Caco-2 (cell line): ENCODE measurements at regions of chr7 and their contacts with region 1.

Region 1: DNA sequence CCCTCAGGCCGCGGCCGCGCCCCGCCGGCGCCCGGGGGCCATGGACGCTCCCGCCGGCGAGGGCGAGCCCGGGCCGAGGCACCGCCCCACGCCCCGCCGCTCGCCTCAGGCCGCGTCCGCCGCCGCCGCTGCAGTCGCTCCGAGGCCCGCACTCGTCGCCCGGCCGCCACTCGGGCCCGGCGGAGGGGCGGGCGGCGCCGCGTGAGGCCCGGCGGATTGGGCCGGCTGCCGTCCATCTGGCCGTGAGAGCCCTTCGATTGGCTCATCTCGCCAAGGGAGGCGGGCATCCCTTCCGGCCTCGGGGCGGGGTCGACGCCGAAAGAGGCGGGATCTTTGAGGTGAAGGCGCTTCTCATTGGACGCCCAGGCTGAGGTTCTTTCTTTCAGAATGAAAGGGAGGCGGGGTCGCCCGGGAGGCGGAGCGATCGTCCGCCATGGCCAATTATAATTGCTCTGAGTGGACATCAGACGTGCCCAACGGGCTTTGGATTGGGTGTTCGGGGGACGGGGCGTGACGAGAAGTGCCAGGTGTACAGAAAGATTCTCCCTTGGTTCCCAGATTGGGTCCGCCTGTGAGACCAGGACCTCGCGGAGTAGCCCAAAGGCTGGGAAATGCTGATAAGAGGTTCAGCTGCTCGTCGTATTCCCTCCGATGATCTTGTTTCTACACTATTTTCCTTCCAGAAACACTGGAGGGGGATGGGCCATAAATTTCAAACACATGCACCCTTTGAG is at the start of gene GNA12:
- DNase-seq: peak; percentile 99
- H3K4me3 ChIP-seq: peak within 1 kb of the TSS; percentile 94
- H3K4me3 Mint-ChIP-seq: peak within 1 kb of the TSS; percentile 77
- H3K27ac Mint-ChIP-seq: peak within 1 kb of the TSS; percentile 71
- H3K4me1 ChIP-seq: peaks cover 12% of the 10 kb centered on the region
- H3K4me1 Mint-ChIP-seq: peaks cover 6% of the 10 kb centered on the region
- H3K27me3 ChIP-seq: no peaks in the 10 kb centered on the region
- H3K27me3 Mint-ChIP-seq: no peaks in the 10 kb centered on the region
- CTCF ChIP-seq: no peak
- total RNA-seq, gene GNA12: 59.3 and 63.8 TPM in 2 replicates

Region 2: GRCh38 chr7:2157468-2158279 is 686.7 kb before region 1 on chr7:
- CTCF ChIA-PET with region 1: no interaction called
- POLR2A ChIA-PET with region 1: no interaction called
- intact Hi-C with region 1: no loop called
- DNase-seq: no peak
- H3K4me3 ChIP-seq: no peak overlapping the region
- H3K4me3 Mint-ChIP-seq: no peak overlapping the region
- H3K27ac Mint-ChIP-seq: peak overlapping the region; percentile 34
- H3K4me1 ChIP-seq: peaks cover 28% of the 10 kb centered on the region
- H3K4me1 Mint-ChIP-seq: peaks cover 8% of the 10 kb centered on the region
- H3K27me3 ChIP-seq: no peaks in the 10 kb centered on the region
- H3K27me3 Mint-ChIP-seq: no peaks in the 10 kb centered on the region
- CTCF ChIP-seq: no peak

Region 3: GRCh38 chr7:2670720-2671391 is 173.5 kb before region 1 on chr7:
- CTCF ChIA-PET with region 1: no interaction called
- POLR2A ChIA-PET with region 1: no interaction called
- intact Hi-C with region 1: loop called (anchors 10 kb)
- DNase-seq: peak; percentile 70 to 82
- H3K4me3 ChIP-seq: no peak overlapping the region
- H3K4me3 Mint-ChIP-seq: no peak overlapping the region
- H3K27ac Mint-ChIP-seq: no peak overlapping the region
- H3K4me1 ChIP-seq: no peaks in the 10 kb centered on the region
- H3K4me1 Mint-ChIP-seq: peaks cover 7% of the 10 kb centered on the region
- H3K27me3 ChIP-seq: no peaks in the 10 kb centered on the region
- H3K27me3 Mint-ChIP-seq: peaks cover 3% of the 10 kb centered on the region
- CTCF ChIP-seq: peak; percentile 85 to 90